ENCODE measurements at regions of chr7 and their contacts with region 1.

Region 1: DNA sequence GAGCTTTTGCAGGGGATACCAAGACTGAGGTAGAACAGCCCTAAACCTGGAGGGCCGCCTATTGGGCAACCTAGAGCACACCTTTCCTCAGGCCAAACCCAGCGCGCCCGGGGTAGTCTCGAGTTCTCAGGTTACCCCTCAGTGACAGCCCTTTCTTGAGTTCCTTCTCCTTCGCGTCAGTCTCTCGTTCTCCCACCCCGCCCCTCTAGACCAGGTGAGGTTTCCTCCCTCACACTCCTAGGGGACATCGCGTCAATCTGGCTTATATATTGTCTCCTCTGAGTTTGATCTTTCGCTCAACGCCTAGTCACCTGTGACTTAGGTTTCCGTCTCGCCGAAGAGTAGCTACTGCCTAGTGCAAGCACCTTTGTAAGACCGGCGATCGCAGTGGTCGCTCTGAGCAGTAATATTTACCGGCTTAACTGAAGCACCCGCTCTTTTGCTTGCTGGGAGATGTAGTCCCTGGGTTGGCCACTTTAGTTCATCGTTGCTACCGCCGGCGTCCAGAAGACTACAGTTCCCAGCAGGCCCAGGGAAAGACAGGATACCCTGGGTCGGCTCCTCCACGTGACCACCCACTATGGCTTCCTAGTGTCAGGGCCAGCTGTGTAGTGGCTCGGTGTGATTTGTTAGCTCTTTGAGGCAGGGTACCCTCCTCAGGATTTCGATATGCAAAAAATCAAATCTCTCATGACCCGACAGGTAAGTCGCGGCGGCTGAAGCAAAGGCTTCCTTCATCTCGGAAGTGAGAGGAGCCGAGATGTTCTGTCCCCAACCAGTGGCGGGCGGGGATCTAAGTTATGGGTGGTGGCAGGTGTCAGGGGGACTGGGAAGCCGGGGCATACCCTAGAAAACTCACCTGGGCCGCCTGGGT is at the start of gene VPS50:
- DNase-seq: peak; percentile 74
- ATAC-seq: peak; percentile 97
- H3K4me3 Mint-ChIP-seq: peak within 1 kb of the TSS; percentile 100
- H3K27ac Mint-ChIP-seq: peak within 1 kb of the TSS; percentile 98
- H3K4me1 Mint-ChIP-seq: peaks cover 22% of the 10 kb centered on the region
- H3K27me3 Mint-ChIP-seq: no peaks in the 10 kb centered on the region
- CTCF ChIP-seq: no peak
- total RNA-seq, gene VPS50: 29.2 and 43.7 TPM in 2 replicates

Region 2: GRCh38 chr7:92245487-92246362 is 986.3 kb before region 1 on chr7 and contains the starts of genes ANKIB1 and KRIT1:
- CTCF ChIA-PET with region 1: no interaction called
- POLR2A ChIA-PET with region 1: no interaction called
- intact Hi-C with region 1: loop called (anchors 1 kb)
- DNase-seq: peak; percentile 79
- ATAC-seq: peak; percentile 84
- H3K4me3 Mint-ChIP-seq: peak within 1 kb of the TSS; percentile 100
- H3K27ac Mint-ChIP-seq: peak within 1 kb of the TSS; percentile 99
- H3K4me1 Mint-ChIP-seq: peaks cover 40% of the 10 kb centered on the region
- H3K27me3 Mint-ChIP-seq: no peaks in the 10 kb centered on the region
- CTCF ChIP-seq: no peak
- total RNA-seq, gene ANKIB1: 42.5 and 50.6 TPM in 2 replicates
- total RNA-seq, gene KRIT1: 53.4 and 61.1 TPM in 2 replicates

Region 3: DNA sequence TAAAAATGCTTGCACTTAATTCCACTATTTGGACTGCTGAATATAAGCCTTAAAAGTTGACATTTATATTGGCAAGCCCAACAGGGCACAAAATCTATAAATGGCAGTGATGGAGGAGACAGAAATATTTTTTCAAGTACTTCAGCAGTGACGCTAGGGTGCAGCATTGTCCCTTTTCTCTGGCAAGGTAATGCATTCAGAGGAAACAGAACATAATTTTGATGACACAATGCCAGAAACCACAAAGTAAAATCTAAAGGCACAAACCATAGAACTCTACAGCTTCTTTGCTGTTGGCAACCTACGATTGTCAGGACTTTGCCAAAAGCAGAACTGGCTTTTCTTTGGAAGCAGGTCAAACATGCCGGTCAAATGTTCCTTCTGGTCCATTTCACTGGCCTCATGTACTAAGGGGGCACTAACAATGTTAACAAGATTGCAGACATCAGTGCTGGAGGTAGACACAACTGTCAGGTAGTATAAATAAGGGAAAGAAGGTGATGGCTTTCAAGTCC is 611.0 kb before region 1 on chr7:
- CTCF ChIA-PET with region 1: interaction called, 4 read pairs
- POLR2A ChIA-PET with region 1: interaction called, 4 read pairs
- intact Hi-C with region 1: loop called (anchors 1 kb)
- DNase-seq: no peak
- ATAC-seq: peak; percentile 78
- H3K4me3 Mint-ChIP-seq: peak overlapping the region; percentile 17
- H3K27ac Mint-ChIP-seq: peak overlapping the region; percentile 76
- H3K4me1 Mint-ChIP-seq: peaks cover 22% of the 10 kb centered on the region
- H3K27me3 Mint-ChIP-seq: no peaks in the 10 kb centered on the region
- CTCF ChIP-seq: no peak

Region 4: GRCh38 chr7:92669616-92670165 is 562.3 kb before region 1 on chr7:
- CTCF ChIA-PET with region 1: no interaction called
- POLR2A ChIA-PET with region 1: no interaction called
- intact Hi-C with region 1: no loop called
- DNase-seq: no peak
- ATAC-seq: no peak
- H3K4me3 Mint-ChIP-seq: no peak overlapping the region
- H3K27ac Mint-ChIP-seq: no peak overlapping the region
- H3K4me1 Mint-ChIP-seq: peaks cover 16% of the 10 kb centered on the region
- H3K27me3 Mint-ChIP-seq: no peaks in the 10 kb centered on the region
- CTCF ChIP-seq: no peak

Region 5: DNA sequence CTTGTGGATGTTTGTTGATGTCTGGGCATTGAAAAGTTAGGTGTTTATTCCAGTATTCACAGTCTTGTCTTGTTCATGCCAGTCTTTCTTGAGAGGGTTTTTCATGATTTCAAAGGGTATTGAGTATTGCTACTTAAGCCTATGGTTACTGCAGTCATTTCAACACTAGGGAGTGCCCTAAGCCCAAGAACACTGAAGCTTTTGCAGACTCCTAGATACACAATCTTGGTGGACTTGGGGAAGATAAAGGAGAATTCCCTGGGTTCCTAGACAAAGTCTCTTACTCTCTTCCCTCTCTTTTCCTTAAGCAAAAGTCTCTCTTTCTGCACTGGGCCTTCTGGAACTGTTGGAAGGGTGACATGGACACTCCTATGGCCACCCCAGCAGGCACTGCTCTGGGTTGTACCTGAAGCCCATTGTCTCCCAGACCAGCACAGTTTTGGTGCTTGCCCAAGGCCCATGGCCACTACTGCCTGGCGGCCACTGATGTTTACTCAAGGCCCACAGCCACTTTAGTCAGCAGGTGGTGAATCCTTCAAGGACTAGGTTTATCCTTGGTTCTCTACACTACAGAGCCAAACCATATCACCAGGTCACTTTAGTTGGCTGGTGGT is 139.2 kb before region 1 on chr7:
- CTCF ChIA-PET with region 1: interaction called, 6 read pairs
- POLR2A ChIA-PET with region 1: no interaction called
- intact Hi-C with region 1: loop called (anchors 1 kb)
- DNase-seq: no peak
- ATAC-seq: peak; percentile 42
- H3K4me3 Mint-ChIP-seq: no peak overlapping the region
- H3K27ac Mint-ChIP-seq: no peak overlapping the region
- H3K4me1 Mint-ChIP-seq: no peaks in the 10 kb centered on the region
- H3K27me3 Mint-ChIP-seq: peaks cover 13% of the 10 kb centered on the region
- CTCF ChIP-seq: no peak

Region 6: DNA sequence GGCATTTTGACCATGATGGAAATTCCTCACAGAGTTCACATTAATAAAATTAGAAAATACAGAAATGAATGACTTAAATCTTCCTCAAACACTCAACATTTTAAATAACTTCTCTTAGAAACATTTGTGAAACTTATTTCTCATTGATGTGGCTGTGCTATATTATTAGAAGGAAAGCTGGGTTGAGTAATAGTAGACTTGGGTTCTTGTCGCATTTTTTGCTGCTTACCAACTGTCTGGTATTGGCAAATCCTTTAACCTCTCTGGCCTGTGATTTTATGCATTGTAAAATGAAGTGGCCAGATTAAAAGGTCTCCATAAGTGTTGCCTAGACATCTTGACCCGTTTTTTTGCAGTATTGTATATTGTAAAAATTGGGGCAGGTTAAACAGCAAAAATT is 66.6 kb after region 1 on chr7:
- CTCF ChIA-PET with region 1: no interaction called
- POLR2A ChIA-PET with region 1: no interaction called
- intact Hi-C with region 1: no loop called
- DNase-seq: no peak
- ATAC-seq: no peak
- H3K4me3 Mint-ChIP-seq: no peak overlapping the region
- H3K27ac Mint-ChIP-seq: no peak overlapping the region
- H3K4me1 Mint-ChIP-seq: no peaks in the 10 kb centered on the region
- H3K27me3 Mint-ChIP-seq: no peaks in the 10 kb centered on the region
- CTCF ChIP-seq: no peak

Region 7: DNA sequence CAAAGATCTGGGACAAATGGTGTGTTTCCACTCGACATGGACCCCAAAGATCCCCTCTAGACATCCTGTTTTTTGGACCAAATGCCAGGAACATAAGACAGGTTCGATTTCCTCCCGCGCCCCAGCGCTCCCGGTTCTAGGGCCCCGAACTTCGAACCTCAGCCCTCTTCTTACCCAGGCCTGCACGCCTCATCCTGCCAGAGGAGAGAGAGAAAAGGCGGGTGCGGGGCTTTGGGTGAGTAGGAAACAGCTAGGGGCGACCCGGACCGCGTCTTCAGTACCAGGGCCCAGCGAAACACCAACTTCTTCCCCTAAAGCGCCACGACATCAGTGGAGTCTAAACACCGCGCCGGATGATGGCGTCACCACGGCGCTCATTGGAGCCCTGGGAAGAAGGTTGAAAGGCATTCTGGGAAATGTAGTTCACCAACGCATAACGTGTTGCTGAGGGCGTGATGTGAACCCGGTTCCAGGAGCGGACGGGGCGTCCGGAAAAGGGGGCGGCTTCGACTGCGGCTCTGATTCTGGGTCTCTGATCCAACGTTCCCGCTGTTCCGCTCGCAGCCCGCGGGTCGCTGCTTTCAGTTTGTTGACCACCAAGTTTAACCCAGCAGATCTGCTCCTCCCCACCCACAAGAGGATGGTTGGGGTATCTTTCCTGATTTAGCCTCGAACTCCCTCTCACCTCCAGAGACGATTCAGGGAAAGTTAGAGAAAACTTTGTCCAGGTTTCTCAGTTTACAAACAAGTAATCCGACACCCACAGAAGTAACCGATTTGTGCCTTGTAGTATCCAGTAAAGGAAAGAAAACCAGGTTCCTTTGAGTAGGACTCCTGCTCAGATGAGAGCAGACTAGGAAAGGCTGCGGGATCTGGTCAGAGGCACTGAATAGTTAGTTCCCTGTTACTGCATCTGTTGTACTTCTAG is 772.3 kb after region 1 on chr7 and contains the start of gene BET1:
- CTCF ChIA-PET with region 1: no interaction called
- POLR2A ChIA-PET with region 1: no interaction called
- intact Hi-C with region 1: loop called (anchors 5 kb)
- DNase-seq: peak; percentile 89
- ATAC-seq: peak; percentile 96
- H3K4me3 Mint-ChIP-seq: peak within 1 kb of the TSS; percentile 100
- H3K27ac Mint-ChIP-seq: peak within 1 kb of the TSS; percentile 99
- H3K4me1 Mint-ChIP-seq: peaks cover 50% of the 10 kb centered on the region
- H3K27me3 Mint-ChIP-seq: peaks cover 4% of the 10 kb centered on the region
- CTCF ChIP-seq: no peak
- total RNA-seq, gene BET1: 23.0 and 23.7 TPM in 2 replicates